ENCODE measurements at regions of chr2 and their contacts with region 1.

Region 1: DNA sequence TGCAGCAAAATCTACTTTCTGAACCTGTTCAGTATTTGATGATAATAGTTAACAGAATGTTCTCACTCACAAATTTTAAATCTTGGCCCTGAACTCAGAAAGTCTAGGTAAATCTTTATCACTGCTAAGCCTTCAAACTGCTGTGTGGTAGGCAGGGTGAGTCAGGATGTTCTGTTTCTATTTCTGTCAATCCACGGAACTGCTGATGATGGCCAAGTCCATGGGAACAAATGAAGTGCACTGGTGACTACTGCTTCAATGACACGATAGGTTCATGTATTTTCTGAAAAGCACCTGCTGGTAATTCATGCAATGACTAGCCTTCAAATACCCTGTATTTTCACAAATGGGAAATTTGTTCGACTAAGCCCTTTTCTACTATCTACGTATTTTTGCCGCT is 14.2 kb downstream of the NIFK start:
- DNase-seq: no peak

Region 2: GRCh38 chr2:121400201-121400600 is 322.3 kb before region 1 on chr2:
- intact Hi-C with region 1: loop called (anchors 2 kb)
- DNase-seq: no peak

Region 3: DNA sequence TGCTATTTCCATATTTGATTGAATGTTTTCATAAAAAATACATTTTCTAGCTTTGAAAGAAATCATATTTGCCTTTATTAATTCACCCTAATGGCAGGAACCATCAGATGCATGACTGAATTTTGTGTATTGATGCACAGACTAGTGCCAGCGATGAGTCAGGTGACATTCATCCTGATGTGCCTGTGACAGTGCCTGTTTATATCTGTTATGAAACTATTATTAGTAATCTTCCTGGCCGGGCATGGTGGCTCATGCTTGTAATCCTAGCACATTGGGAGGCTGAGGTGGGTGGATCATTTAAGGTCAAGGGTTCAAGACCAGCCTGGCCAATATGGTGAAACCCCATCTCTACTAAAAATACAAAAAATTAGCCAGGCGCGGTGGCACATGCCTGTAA is 203.0 kb after region 1 on chr2:
- intact Hi-C with region 1: no loop called
- DNase-seq: no peak

Measured in cardiac septum (tissue), 1 donor.